ENCODE measurements at regions of chr7 and their contacts with region 1.

Region 1: GRCh38 chr7:132394283-132395198 is 181.7 kb downstream of the PLXNA4 start:
- DNase-seq: peak; percentile 83
- H3K4me3 Mint-ChIP-seq: no peak overlapping the region
- H3K27ac Mint-ChIP-seq: peak overlapping the region; percentile 10
- H3K4me1 Mint-ChIP-seq: peaks cover 26% of the 10 kb centered on the region
- H3K27me3 Mint-ChIP-seq: peaks cover 10% of the 10 kb centered on the region

Region 2: GRCh38 chr7:132318352-132319318 is 75.9 kb before region 1 on chr7:
- intact Hi-C with region 1: loop called (anchors 2 kb)
- DNase-seq: peak; percentile 93
- H3K4me3 Mint-ChIP-seq: peak overlapping the region; percentile 14
- H3K27ac Mint-ChIP-seq: no peak overlapping the region
- H3K4me1 Mint-ChIP-seq: peaks cover 13% of the 10 kb centered on the region
- H3K27me3 Mint-ChIP-seq: peaks cover 36% of the 10 kb centered on the region

Region 3: DNA sequence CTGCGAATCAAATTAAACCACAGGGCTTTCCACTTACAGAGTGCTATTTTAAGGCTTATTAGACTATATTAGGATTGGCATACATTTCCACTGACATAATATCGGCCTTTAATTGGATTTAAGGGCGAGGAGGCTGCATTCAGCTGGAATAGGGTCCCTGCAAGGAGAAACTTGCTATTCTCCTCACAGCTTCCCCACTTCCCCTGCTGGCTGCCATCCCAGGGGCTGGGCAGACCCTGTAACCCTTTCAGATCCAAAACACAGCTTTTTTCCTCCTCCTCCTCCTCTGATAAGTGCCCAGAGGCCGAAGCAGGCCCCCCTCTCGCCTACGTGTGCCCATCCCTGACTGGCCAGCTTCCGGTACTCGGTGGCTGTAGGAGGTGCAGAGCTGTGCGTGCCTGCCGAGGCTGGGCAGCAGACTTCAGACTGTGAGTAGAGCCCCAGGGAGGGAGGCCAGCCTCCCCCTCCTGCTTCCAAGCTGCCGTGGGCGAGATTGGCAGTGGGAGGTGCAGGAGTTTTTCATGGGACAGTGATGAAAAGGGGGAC is 42.5 kb before region 1 on chr7:
- intact Hi-C with region 1: no loop called
- DNase-seq: no peak
- H3K4me3 Mint-ChIP-seq: no peak overlapping the region
- H3K27ac Mint-ChIP-seq: no peak overlapping the region
- H3K4me1 Mint-ChIP-seq: no peaks in the 10 kb centered on the region
- H3K27me3 Mint-ChIP-seq: peaks cover 48% of the 10 kb centered on the region

Region 4: DNA sequence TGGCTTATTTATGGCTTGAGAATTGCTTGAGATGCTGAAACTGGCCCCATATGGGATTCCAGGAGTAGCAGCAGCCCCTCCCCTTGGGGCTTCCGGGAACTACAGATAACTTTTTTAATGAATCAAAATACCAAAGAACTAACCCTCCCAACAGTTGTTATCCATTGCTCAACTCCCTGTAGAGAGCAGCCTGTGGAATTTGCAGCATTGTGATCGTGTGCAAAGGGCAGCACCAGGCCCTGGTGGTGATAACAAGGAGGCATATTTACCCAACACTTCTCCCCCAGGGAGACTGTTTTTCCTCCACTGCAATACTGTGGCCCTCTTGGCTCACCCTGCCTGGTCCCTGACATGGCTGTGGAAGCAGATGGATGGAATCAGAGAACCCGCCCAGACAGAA is 14.5 kb before region 1 on chr7:
- intact Hi-C with region 1: no loop called
- DNase-seq: no peak
- H3K4me3 Mint-ChIP-seq: no peak overlapping the region
- H3K27ac Mint-ChIP-seq: no peak overlapping the region
- H3K4me1 Mint-ChIP-seq: no peaks in the 10 kb centered on the region
- H3K27me3 Mint-ChIP-seq: peaks cover 54% of the 10 kb centered on the region

Region 5: GRCh38 chr7:132464746-132465145 is 70.2 kb after region 1 on chr7:
- intact Hi-C with region 1: loop called (anchors 5 kb)
- DNase-seq: no peak
- H3K4me3 Mint-ChIP-seq: no peak overlapping the region
- H3K27ac Mint-ChIP-seq: no peak overlapping the region
- H3K4me1 Mint-ChIP-seq: peaks cover 45% of the 10 kb centered on the region
- H3K27me3 Mint-ChIP-seq: peaks cover 6% of the 10 kb centered on the region

Region 6: DNA sequence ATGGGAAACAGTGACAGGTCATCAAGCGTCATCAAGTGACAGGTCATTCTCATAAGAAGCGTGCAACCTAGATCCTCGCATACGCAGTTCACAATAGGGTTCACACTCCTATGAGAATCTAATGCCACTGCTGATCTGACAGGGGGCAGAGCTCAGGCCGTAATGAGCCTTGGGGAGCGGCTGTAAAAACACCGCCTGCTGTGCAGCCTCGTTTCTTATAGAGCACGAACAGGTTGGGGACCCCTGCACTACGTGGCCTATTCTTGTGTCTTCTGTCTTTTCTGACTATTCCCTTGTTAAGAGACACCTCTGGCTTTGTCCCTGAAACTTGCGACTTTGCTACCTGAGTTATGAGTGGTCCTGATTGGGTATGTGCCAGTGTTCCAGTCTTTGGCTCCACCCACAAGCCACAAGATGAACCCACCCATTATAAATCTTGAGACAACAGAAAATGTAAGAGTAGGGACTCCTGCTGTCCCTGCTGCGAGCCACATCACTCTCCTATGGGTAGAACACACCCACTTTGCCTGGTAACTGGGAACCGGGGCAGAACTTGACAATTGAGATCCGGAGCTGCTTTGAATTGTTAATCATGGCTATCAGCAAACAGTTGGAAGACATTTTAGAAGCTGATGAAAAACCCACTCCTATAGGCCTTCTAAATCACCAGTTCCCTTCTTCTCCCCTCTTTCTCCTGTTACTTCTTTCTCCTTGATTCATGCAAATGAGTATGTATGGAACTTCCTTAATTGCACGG is 802.5 kb after region 1 on chr7:
- intact Hi-C with region 1: no loop called
- DNase-seq: no peak
- H3K4me3 Mint-ChIP-seq: no peak overlapping the region
- H3K27ac Mint-ChIP-seq: no peak overlapping the region
- H3K4me1 Mint-ChIP-seq: no peaks in the 10 kb centered on the region
- H3K27me3 Mint-ChIP-seq: peaks cover 3% of the 10 kb centered on the region